ENCODE measurements at regions of chr6 and their contacts with region 1.

Region 1: DNA sequence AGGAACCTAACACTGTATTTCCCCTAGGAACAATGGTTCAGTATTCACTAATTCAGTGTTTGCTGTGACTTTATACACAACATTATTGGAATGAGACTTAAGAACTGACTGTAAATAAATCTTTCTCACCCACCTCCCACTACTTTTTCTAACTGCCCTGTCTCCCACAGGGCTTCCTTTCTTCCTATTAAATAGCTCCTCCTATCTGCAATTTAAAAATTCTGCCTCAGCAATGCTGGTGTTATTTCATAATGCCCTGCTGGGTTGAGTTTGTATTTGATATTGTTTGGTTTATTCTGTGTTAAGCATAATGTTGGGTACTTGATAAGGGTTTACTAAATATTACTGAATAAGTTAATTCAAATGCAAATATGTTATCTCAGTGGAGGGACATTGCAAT is 573.1 kb upstream of the RNF217 start:
- DNase-seq: no peak
- H3K4me3 ChIP-seq: no peak overlapping the region
- H3K27ac ChIP-seq: no peak overlapping the region
- H3K4me1 ChIP-seq: no peaks in the 10 kb centered on the region
- H3K27me3 ChIP-seq: no peaks in the 10 kb centered on the region
- CTCF ChIP-seq: 0 out of 2 replicates have a peak, but pooled peaks have one; percentile 28

Region 2: DNA sequence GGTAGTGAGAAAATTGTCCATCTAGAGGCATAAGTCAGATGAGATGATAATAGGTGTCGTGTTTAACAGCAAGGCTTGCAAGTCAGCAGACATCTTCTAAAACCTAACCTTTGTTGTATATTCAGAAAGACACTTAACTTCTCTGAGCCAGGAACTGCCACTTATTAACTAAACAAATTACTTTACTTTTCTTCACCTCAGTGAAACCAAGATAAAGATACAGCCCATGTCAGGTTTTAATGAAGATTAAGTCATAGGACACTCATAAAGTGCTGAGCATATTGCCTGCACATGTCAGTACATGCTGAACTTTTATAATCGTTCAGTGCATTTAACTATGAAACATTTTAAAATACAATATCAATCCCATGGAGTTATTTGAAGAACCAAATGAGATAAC is 298.6 kb before region 1 on chr6:
- CTCF ChIA-PET with region 1: no interaction called
- POLR2A ChIA-PET with region 1: no interaction called
- intact Hi-C with region 1: no loop called
- DNase-seq: no peak
- H3K4me3 ChIP-seq: no peak overlapping the region
- H3K27ac ChIP-seq: no peak overlapping the region
- H3K4me1 ChIP-seq: no peaks in the 10 kb centered on the region
- H3K27me3 ChIP-seq: no peaks in the 10 kb centered on the region
- CTCF ChIP-seq: no peak

Region 3: DNA sequence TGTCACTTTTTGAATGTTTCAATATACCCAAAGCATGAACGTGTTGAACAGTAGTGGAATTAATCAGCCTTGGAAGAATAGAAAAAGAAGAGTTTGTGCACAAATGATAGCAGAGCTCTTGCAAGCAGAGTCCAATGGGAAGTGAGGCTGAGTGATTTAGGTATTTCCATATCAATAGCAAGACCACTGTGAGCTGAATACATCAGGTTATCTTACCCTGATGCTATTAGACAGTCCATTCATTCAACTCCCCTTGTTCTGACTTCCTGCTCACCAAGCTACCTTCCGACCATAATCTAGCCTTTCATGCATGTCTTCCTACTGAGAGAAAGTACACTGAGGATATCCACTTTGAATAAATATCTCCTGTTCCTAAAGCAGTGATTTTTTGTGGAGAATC is 223.9 kb after region 1 on chr6:
- CTCF ChIA-PET with region 1: interaction called, 18 read pairs
- POLR2A ChIA-PET with region 1: no interaction called
- intact Hi-C with region 1: no loop called
- DNase-seq: no peak
- H3K4me3 ChIP-seq: no peak overlapping the region
- H3K27ac ChIP-seq: no peak overlapping the region
- H3K4me1 ChIP-seq: no peaks in the 10 kb centered on the region
- H3K27me3 ChIP-seq: no peaks in the 10 kb centered on the region
- CTCF ChIP-seq: no peak

Measured in PC-9 (cell line).